Heart left ventricle (tissue), 16 donors: ENCODE measurements at regions of chr3 and their contacts with region 1.

Region 1: DNA sequence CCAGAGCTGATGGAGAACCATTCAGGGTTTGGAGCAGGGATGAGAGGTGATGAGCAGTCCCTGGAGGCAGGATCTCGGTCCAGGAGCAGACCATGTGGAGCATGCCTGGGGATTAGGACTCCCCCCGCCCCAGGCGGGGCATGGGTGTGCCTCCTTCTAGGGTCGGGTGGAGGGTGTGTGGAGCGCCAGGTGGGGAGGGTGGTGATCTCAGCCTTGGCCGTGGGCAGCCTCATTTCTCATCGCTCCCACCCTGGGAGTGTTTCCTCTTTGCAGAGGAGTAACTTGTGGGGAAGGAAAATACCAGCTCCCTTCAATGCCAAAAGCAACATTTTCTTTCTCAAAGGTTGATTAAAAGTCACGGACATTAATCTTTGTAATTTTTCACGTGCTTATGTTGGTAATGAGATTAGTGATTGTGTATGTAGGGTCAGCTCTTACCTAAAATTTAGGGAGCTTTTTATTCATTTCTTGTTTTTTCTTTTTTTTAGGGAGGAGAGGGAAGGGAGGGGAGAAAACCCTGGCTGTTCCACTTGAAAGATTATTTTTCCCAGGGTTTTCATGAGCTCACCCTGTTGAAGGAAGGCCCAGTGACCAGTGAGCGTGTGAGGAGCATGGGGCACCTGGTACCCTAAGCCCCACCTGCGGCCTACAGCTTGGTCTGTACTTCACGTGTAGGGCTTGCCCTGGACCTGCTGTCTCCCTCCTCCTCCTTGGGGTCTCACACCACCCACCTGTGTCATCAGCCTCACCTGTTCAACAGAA is 11.0 kb downstream of the FBLN2 start:
- DNase-seq: peak; percentile 57 to 67 (median 63)
- ATAC-seq: peak; percentile 43 to 82 (median 78)
- H3K4me3 ChIP-seq: no peak overlapping the region
- H3K27ac ChIP-seq: peak overlapping the region in 9 of 12 donors; percentile 27 to 80 (median 62)
- H3K4me1 ChIP-seq: peaks cover 0 to 72% (median 28%) of the 10 kb centered on the region in 12 donors
- H3K27me3 ChIP-seq: no peaks in the 10 kb centered on the region
- CTCF ChIP-seq: no peak
- POLR2A ChIP-seq: no peak

Region 2: DNA sequence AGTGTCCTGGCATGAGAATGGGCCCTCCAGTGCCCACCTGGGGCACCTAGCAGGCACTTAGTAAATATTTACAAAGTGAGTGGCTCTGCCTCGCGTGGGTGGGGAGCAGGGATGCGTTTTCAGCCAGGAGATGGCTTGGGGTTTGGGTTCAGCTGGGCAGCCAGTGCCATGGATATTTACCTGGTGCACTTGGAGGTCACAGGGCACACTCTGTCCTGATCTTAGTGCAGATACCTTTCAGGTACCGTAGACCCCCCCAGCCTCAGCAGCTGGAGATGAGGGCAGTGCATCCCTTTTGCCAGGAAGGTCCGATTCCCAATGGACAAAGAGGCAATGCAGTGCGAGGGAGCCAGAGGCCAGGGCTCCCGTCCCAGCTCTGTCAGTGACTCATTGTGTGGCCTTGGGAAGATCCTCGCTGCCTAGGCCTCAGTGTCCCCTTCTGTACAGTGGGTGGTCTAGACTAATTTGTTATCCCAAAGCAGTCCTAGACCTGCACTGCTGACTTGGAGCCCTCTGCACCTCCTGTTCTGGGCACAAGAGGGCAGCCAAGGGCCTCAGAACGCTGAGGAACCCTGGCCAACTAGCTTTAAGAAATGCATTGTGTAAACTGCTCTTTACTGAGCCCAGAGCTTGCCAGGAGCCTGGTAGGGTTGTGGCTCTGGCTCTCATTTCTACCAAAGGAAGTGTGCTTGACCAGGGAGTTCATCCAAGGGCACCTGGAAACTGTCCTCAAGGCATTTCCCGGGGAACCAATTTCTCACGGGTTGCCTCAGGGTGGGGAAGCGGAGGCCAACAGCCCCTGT is 63.8 kb before region 1 on chr3:
- intact Hi-C with region 1: loop called in 1 of 10 experiments (anchors 10 kb)
- DNase-seq: peak; percentile 70 to 80 (median 73)
- ATAC-seq: peak; percentile 72 to 95 (median 90)
- H3K4me3 ChIP-seq: no peak overlapping the region
- H3K27ac ChIP-seq: peak overlapping the region in 1 of 12 donors; percentile 3
- H3K4me1 ChIP-seq: peaks cover 0 to 14% (median 9%) of the 10 kb centered on the region in 12 donors
- H3K27me3 ChIP-seq: no peaks in the 10 kb centered on the region
- CTCF ChIP-seq: peak; percentile 83 to 98 (median 94)
- POLR2A ChIP-seq: no peak

Region 3: DNA sequence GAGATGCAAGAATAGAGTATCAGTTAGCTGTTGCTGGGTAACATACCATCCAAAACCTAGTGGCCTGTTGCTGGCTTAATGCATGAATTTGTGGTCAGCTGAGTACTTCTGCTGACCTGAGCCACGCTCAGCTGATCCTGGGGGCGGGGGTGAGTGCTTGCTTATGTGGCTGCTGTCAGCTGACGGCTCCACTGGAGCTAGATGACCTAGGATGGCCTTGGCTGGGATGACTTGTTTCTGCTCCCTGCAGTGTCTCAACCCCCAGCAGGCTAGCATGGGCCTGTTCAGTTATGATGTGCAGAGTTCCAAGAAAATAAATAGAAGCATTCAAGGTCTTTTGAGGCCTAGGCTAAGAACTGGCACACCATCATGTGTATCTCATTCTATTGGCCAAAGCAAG is 52.9 kb after region 1 on chr3:
- intact Hi-C with region 1: loop called in 1 of 10 experiments (anchors 5 kb)
- DNase-seq: peak in 3 of 5 donors; percentile 36 to 66 (median 48)
- ATAC-seq: peak; percentile 6 to 72 (median 68)
- H3K4me3 ChIP-seq: no peak overlapping the region
- H3K27ac ChIP-seq: no peak overlapping the region
- H3K4me1 ChIP-seq: no peaks in the 10 kb centered on the region
- H3K27me3 ChIP-seq: no peaks in the 10 kb centered on the region
- CTCF ChIP-seq: no peak
- POLR2A ChIP-seq: no peak